ENCODE measurements at regions of chr7 and their contacts with region 1.

Region 1: DNA sequence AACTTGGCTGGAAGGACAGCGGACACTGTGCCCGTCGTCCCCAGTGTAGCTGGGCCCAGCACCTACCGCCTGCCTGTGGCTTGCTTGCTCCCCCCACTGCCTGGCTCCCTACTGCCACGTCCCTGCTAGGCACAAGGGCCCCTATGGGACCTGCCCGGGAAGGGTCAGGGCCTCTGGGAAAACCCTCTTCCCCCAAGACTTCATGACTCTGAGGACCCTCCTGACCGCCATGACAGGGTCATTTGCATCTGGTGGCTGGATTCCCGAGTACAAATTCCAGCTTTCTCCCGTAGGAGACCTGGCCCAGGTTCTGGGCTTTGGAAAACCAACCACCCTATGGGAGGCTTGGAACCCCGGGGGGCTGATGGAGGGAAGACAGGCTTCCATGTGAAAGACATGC is 1.4 kb upstream of the MMD2 start:
- DNase-seq: peak in 4 of 10 donors; percentile 28 to 65 (median 40)
- H3K4me3 ChIP-seq: no peak overlapping the region
- H3K27ac ChIP-seq: no peak overlapping the region
- H3K27me3 ChIP-seq: peaks cover 0 to 15% (median 0%) of the 10 kb centered on the region in 45 donors
- CTCF ChIP-seq: peak in 23 of 56 donors; percentile 10 to 56 (median 40)

Region 2: DNA sequence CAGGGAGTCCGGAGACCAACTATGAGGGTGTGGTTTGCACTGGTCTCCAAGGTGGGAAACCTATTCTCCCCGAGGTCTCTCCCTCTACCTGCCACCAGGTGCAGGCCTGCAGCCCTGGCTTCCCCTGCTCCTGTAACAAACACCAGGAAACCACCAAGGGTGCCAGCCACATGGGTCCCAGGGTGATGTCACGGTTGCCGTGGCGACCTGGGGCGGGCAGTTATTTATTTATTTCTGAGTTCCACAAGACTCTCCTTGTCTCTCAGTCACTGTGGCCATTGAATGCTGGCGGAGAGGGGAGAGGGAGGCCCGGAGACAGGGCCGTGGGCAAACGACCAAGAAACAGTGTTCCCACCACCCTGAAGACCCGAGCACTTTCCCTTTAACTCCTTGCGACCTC is 28.4 kb before region 1 on chr7:
- intact Hi-C with region 1: loop called in 1 of 2 experiments (anchors 1 kb)
- DNase-seq: peak; percentile 32 to 96 (median 89)
- H3K4me3 ChIP-seq: peak overlapping the region in 21 of 59 donors; percentile 2 to 50 (median 20)
- H3K27ac ChIP-seq: peak overlapping the region in 53 of 59 donors; percentile 2 to 85 (median 72)
- H3K27me3 ChIP-seq: peaks cover 0 to 2% (median 0%) of the 10 kb centered on the region in 45 donors
- CTCF ChIP-seq: peak in 6 of 56 donors; percentile 11 to 37 (median 26)

Measured in dorsolateral prefrontal cortex (tissue), 120 donors.